ENCODE measurements at regions of chr15 and their contacts with region 1.

Region 1: GRCh38 chr15:65054333-65055200 is 9.4 kb downstream of the SLC51B start:
- DNase-seq: peak; percentile 26 to 72 (median 40)
- ATAC-seq: peak; percentile 35
- H3K4me3 ChIP-seq: no peak overlapping the region
- H3K4me3 Mint-ChIP-seq: no peak overlapping the region
- H3K27ac ChIP-seq: no peak overlapping the region
- H3K27ac Mint-ChIP-seq: no peak overlapping the region
- H3K4me1 ChIP-seq: peaks cover 6% of the 10 kb centered on the region
- H3K4me1 Mint-ChIP-seq: peaks cover 7% of the 10 kb centered on the region
- H3K27me3 ChIP-seq: peaks cover 0 to 6% of the 10 kb centered on the region in 2 experiments
- H3K27me3 Mint-ChIP-seq: no peaks in the 10 kb centered on the region
- CTCF ChIP-seq: peak; percentile 72

Region 2: GRCh38 chr15:64766058-64766457 is 288.5 kb before region 1 on chr15:
- CTCF ChIA-PET with region 1: no interaction called
- POLR2A ChIA-PET with region 1: no interaction called
- intact Hi-C with region 1: no loop called
- DNase-seq: no peak
- ATAC-seq: no peak
- H3K4me3 ChIP-seq: no peak overlapping the region
- H3K4me3 Mint-ChIP-seq: no peak overlapping the region
- H3K27ac ChIP-seq: no peak overlapping the region
- H3K27ac Mint-ChIP-seq: no peak overlapping the region
- H3K4me1 ChIP-seq: no peaks in the 10 kb centered on the region
- H3K4me1 Mint-ChIP-seq: no peaks in the 10 kb centered on the region
- H3K27me3 ChIP-seq: no peaks in the 10 kb centered on the region
- H3K27me3 Mint-ChIP-seq: no peaks in the 10 kb centered on the region
- CTCF ChIP-seq: no peak

Region 3: DNA sequence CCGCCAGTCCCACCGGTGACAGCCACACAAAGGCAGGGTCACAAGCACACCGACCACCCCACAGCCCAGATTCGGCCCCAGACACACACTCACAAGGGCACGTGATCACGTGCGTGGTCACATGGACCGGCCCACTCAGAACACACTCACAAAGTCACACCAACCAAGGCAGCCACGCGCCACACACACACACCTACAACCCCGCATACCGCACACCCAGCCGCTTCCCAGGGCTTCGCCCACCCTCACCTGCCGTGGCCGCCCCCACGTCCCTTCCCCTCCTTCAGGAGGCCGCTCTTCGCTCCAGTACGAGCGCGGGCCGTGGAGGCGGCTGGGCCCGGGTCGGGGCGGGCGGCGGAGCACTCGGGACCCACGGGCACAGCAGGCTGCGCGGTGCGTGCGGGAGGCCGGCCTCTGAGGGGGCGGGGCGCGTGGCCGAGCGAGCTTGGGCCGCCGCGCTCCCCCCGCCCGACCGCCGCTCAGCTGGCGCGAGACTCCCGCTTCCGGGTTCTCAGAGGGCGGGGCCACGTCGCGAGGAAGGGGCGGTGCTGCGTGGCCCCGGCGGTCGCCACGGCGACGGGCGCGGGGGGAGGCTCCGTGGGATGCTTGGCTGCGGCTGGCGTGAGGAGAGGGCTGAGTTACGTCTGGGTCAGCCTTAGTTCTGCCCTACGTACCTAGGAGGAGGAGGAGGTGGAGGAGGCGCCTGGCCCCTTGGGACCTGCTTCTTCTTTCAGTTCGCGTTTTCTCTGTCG is 65.0 kb before region 1 on chr15 and contains the start of gene SPG21:
- CTCF ChIA-PET with region 1: no interaction called
- POLR2A ChIA-PET with region 1: no interaction called
- intact Hi-C with region 1: no loop called
- DNase-seq: peak; percentile 71 to 96 (median 87)
- ATAC-seq: peak; percentile 88
- H3K4me3 ChIP-seq: peak within 1 kb of the TSS; percentile 97
- H3K4me3 Mint-ChIP-seq: peak within 1 kb of the TSS; percentile 91
- H3K27ac ChIP-seq: peak within 1 kb of the TSS; percentile 63 to 66
- H3K27ac Mint-ChIP-seq: peak within 1 kb of the TSS; percentile 87
- H3K4me1 ChIP-seq: peaks cover 29% of the 10 kb centered on the region
- H3K4me1 Mint-ChIP-seq: peaks cover 53% of the 10 kb centered on the region
- H3K27me3 ChIP-seq: no peaks in the 10 kb centered on the region
- H3K27me3 Mint-ChIP-seq: no peaks in the 10 kb centered on the region
- CTCF ChIP-seq: no peak
- total RNA-seq, gene SPG21: 29.4 to 32.7 TPM

Region 4: DNA sequence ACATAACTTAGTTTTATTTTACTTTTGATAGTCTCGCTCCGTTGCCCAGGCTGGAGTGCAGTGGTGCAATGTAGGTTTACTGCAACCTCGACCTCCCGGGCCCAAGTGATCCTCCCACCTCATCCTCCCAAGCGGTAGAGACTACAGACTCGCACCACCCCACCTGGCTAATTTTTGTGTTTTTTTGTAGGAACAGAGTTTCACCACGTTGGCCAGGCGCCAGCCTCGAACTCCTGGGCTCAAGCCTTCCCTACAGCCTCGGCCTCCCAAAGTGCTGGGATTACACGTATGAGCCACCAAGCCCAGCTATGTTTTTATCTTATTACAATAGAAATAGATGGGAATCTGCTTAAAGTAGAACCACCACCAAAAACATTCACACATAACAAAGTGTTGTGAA is 244.2 kb after region 1 on chr15:
- CTCF ChIA-PET with region 1: no interaction called
- POLR2A ChIA-PET with region 1: no interaction called
- intact Hi-C with region 1: loop called (anchors 1 to 2 kb)
- DNase-seq: no peak
- ATAC-seq: no peak
- H3K4me3 ChIP-seq: peak overlapping the region; percentile 54
- H3K4me3 Mint-ChIP-seq: peak overlapping the region; percentile 92
- H3K27ac ChIP-seq: peak overlapping the region in 1 of 2 donors; percentile 43
- H3K27ac Mint-ChIP-seq: peak overlapping the region; percentile 91
- H3K4me1 ChIP-seq: peaks cover 39% of the 10 kb centered on the region
- H3K4me1 Mint-ChIP-seq: peaks cover 55% of the 10 kb centered on the region
- H3K27me3 ChIP-seq: no peaks in the 10 kb centered on the region
- H3K27me3 Mint-ChIP-seq: peaks cover 5% of the 10 kb centered on the region
- CTCF ChIP-seq: no peak